ENCODE measurements at regions of chr10 and their contacts with region 1.

Region 1: GRCh38 chr10:69392481-69393000 is 24.2 kb downstream of the TACR2 start:
- DNase-seq: peak; percentile 73 to 88
- H3K4me3 ChIP-seq: no peak overlapping the region
- H3K27ac ChIP-seq: peak overlapping the region; percentile 21; the same call in 1 of the 2 replicates
- H3K4me1 ChIP-seq: peaks cover 29% of the 10 kb centered on the region
- H3K27me3 ChIP-seq: no peaks in the 10 kb centered on the region
- CTCF ChIP-seq: peak; percentile 98

Region 2: GRCh38 chr10:69004821-69005220 is 387.7 kb before region 1 on chr10:
- CTCF ChIA-PET with region 1: no interaction called
- POLR2A ChIA-PET with region 1: interaction called, 3 read pairs
- intact Hi-C with region 1: loop called (anchors 1 kb)
- DNase-seq: peak in 1 of 2 experiments; percentile 56
- H3K4me3 ChIP-seq: no peak overlapping the region
- H3K27ac ChIP-seq: no peak overlapping the region
- H3K4me1 ChIP-seq: no peaks in the 10 kb centered on the region
- H3K27me3 ChIP-seq: no peaks in the 10 kb centered on the region
- CTCF ChIP-seq: peak; percentile 84

Region 3: DNA sequence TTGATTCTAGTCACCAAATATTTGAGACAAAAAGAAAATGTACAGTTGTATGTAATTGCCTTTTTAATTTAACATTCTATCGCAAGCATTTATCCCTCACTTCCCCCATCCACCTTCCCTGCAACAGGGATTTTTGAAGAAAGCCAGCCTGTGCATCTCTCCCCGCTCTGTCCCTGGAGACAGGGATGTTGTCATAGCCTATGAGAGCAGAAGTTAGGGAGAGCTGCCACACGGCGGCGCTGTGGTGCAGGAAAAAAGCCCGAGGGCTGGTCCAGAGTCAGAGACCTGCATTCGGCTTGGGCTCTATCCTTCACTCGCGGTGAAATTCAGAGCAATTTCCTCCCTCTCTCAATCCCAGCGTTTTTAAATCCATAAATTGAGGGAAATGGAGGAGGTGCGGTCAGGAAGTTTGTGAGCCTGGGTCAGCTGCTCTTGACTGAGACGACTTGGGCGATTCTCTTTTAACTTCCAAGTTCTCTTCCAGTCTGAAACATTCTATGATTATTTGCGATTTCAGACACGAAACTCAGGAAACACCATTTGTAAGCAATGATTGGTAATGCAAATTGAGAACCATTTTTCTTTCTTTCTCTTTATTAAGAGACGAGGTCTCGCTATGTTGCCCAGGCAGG is 154.9 kb before region 1 on chr10:
- CTCF ChIA-PET with region 1: interaction called, 9 read pairs
- POLR2A ChIA-PET with region 1: interaction called, 4 read pairs
- intact Hi-C with region 1: loop called (anchors 1 kb)
- DNase-seq: peak; percentile 62 to 90
- H3K4me3 ChIP-seq: no peak overlapping the region
- H3K27ac ChIP-seq: peak overlapping the region; percentile 37; the same call in 1 of the 2 replicates
- H3K4me1 ChIP-seq: peaks cover 28% of the 10 kb centered on the region
- H3K27me3 ChIP-seq: no peaks in the 10 kb centered on the region
- CTCF ChIP-seq: peak; percentile 98

Region 4: GRCh38 chr10:69318106-69318866 is 74.3 kb before region 1 on chr10:
- CTCF ChIA-PET with region 1: interaction called, 3 read pairs
- POLR2A ChIA-PET with region 1: no interaction called
- intact Hi-C with region 1: loop called (anchors 2 kb)
- DNase-seq: peak; percentile 74 to 95
- H3K4me3 ChIP-seq: peak overlapping the region; percentile 97
- H3K27ac ChIP-seq: peak overlapping the region; percentile 73
- H3K4me1 ChIP-seq: peaks cover 64% of the 10 kb centered on the region
- H3K27me3 ChIP-seq: no peaks in the 10 kb centered on the region
- CTCF ChIP-seq: no peak

Region 5: DNA sequence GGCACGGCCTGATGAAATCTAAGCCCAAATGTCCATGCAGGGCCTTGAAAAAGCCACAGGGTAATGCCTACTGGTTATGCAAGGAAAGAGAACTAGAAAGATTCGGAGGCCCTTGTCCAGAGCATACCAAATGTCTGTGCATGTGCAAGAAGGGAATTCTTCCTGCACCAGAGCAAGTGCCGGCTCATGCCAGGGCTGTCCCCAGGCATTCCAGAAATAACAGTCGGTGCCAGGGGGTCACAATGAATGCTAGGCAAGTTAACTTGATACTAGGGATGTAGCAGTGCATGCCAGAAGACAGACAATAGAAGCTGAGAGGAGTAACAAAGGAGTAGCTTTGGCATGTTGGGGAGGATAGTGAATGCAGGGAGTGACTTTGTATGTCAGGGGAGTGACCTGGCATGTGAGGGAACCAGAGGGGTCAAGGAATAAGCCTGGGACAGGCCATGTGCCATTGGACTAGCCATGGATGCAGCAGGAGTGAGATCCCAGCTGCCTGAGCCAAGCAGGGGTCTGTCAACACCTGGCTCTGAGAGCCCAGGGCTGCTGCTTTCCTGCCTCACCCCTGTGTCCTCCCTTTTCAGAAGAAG is 1700.4 kb after region 1 on chr10:
- CTCF ChIA-PET with region 1: no interaction called
- POLR2A ChIA-PET with region 1: interaction called, 21 read pairs
- intact Hi-C with region 1: no loop called
- DNase-seq: no peak
- H3K4me3 ChIP-seq: no peak overlapping the region
- H3K27ac ChIP-seq: no peak overlapping the region
- H3K4me1 ChIP-seq: no peaks in the 10 kb centered on the region
- H3K27me3 ChIP-seq: peaks cover 27% of the 10 kb centered on the region
- CTCF ChIP-seq: no peak